Heart right ventricle (tissue), 16 donors: ENCODE measurements at regions of chr5 and their contacts with region 1.

Region 1: DNA sequence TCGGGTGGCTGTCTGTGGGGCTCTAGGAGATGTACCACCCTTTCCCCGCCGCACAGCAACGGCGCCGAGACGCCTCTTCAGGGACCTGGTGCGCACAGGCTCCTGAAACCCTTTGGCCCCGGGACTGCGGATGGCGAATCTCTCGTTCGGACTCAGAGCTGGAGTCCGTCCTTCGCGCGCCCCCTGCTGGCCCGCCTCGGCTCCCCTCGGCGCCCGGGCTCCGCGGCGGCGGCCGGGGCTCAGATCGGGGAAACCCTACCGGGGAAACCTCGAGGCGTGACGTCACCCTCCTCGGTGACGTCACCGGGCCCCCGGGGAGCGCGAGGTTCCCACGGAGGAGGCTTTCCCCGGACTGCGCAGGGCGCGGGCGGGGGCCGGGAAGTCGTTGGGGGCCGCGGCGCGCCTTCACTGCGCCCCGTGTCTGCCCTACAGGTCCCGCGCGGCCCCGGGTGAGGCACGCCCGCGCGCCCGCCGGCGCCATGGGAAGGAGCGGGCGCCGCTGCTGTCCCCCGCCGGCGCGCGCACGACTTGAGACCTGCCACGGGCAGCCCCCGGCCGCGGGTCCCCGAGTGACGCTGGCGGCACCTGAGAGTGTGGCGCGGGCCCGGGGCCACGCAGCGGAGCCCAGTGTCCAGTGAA is 7.9 kb downstream of the PRR7 start:
- DNase-seq: peak; percentile 91 to 93
- ATAC-seq: peak; percentile 63 to 77 (median 74)
- H3K4me3 ChIP-seq: peak overlapping the region; percentile 39 to 84 (median 63)
- H3K27ac ChIP-seq: peak overlapping the region; percentile 1 to 82 (median 74)
- H3K4me1 ChIP-seq: peaks cover 10 to 57% (median 38%) of the 10 kb centered on the region in 9 donors
- H3K27me3 ChIP-seq: peaks cover 0 to 38% (median 2%) of the 10 kb centered on the region in 7 donors
- CTCF ChIP-seq: peak; percentile 88 to 98 (median 93)

Region 2: GRCh38 chr5:177296581-177296980 is 157.9 kb before region 1 on chr5:
- intact Hi-C with region 1: no loop called
- DNase-seq: no peak
- ATAC-seq: peak in 4 of 8 donors; percentile 10 to 47 (median 35)
- H3K4me3 ChIP-seq: no peak overlapping the region
- H3K27ac ChIP-seq: peak overlapping the region in 5 of 10 donors; percentile 7 to 78 (median 58)
- H3K4me1 ChIP-seq: peaks cover 19 to 60% (median 46%) of the 10 kb centered on the region in 9 donors
- H3K27me3 ChIP-seq: no peaks in the 10 kb centered on the region
- CTCF ChIP-seq: no peak

Region 3: GRCh38 chr5:177311723-177312648 is 142.5 kb before region 1 on chr5 and contains the start of gene MXD3:
- intact Hi-C with region 1: loop called in 3 of 10 experiments (anchors 5 to 10 kb)
- DNase-seq: peak; percentile 95 to 97
- ATAC-seq: peak; percentile 85 to 96 (median 92)
- H3K4me3 ChIP-seq: peak within 1 kb of the TSS; percentile 34 to 70 (median 58)
- H3K27ac ChIP-seq: peak within 1 kb of the TSS in 1 of 10 donors; percentile 97
- H3K4me1 ChIP-seq: peaks cover 14 to 63% (median 28%) of the 10 kb centered on the region in 9 donors
- H3K27me3 ChIP-seq: no peaks in the 10 kb centered on the region
- CTCF ChIP-seq: no peak
- total RNA-seq, gene MXD3: 1.2 to 6.4 (median 2.4) TPM

Region 4: DNA sequence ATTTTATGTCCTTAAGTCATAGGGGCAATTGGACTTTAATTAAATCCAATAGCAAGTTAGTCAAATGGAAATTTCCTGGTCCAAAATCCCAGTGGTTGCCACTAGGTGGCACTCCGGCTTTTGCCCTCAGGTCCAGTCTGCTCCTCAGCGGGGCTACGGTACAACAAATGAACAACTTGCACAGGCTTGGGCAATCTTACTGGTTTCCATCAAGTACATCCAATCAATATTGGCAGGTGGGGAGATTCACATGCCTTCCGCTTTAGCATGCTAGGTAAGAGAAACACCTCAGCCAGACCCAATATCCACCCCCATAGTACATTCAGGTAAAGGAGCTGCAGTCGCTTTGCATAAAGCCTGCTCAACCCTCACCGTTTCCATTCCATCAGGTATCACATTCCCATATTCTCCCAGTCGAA is 136.5 kb before region 1 on chr5:
- intact Hi-C with region 1: loop called in 4 of 10 experiments (anchors 2 to 10 kb)
- DNase-seq: peak in 1 of 2 donors; percentile 70
- ATAC-seq: peak in 7 of 8 donors; percentile 45 to 67 (median 57)
- H3K4me3 ChIP-seq: no peak overlapping the region
- H3K27ac ChIP-seq: no peak overlapping the region
- H3K4me1 ChIP-seq: peaks cover 0 to 14% (median under 1%) of the 10 kb centered on the region in 9 donors
- H3K27me3 ChIP-seq: no peaks in the 10 kb centered on the region
- CTCF ChIP-seq: peak; percentile 72 to 91 (median 85)

Region 5: DNA sequence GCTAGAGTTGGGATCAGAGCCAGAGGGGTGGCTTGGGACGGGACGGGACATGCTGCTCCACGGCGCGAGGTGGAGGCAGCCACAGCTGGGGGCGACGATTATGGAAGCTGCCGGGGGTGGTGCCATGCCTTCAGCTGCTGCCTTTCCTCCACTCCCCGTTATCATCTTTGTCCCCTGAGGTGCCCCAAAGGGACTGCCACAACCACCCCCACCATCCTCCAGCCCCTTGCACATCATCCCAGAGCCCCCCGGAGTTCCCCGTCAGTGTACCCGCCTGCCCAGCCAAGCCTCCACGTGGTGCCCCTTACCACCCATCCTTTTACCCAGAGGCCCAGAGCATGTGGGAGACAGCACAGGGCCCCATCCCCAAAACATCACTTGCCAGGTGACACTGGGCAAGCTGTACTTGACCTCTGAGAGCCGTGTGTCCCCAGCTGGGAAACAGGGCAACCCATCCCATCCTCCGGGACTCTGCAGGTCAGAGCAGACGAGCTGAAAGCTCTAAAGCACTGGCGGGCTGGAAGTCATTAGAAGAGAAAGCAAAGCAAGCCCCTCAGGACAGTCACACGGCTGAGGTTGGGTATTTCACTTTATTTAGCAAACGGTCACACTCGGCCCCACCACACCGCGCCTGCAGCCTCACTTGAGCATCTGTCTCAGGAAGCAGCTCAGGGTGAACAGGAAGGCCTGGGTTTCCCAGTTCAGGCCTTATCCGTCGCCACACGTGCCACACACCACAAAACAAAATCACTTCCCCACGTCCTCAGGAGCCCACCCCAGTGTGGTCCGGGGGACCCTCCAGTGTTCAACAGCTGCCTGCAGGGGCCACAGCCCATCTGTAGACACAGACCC is 123.3 kb before region 1 on chr5:
- intact Hi-C with region 1: no loop called
- DNase-seq: no peak
- ATAC-seq: no peak
- H3K4me3 ChIP-seq: no peak overlapping the region
- H3K27ac ChIP-seq: no peak overlapping the region
- H3K4me1 ChIP-seq: peaks cover 5 to 39% (median 20%) of the 10 kb centered on the region in 9 donors
- H3K27me3 ChIP-seq: no peaks in the 10 kb centered on the region
- CTCF ChIP-seq: no peak

Region 6: GRCh38 chr5:177390363-177391300 is 63.9 kb before region 1 on chr5:
- intact Hi-C with region 1: loop called in 9 of 10 experiments (anchors 1 to 5 kb)
- DNase-seq: peak; percentile 69 to 82
- ATAC-seq: peak; percentile 75 to 94 (median 86)
- H3K4me3 ChIP-seq: no peak overlapping the region
- H3K27ac ChIP-seq: peak overlapping the region in 1 of 10 donors; percentile 61
- H3K4me1 ChIP-seq: peaks cover 0 to 30% (median 0%) of the 10 kb centered on the region in 9 donors
- H3K27me3 ChIP-seq: peaks cover 0 to 40% (median 11%) of the 10 kb centered on the region in 7 donors
- CTCF ChIP-seq: peak; percentile 91 to 99 (median 99)

Region 7: GRCh38 chr5:177403792-177404640 is 50.5 kb before region 1 on chr5:
- intact Hi-C with region 1: loop called (anchors 1 to 5 kb)
- DNase-seq: peak; percentile 81 to 86
- ATAC-seq: peak; percentile 94 to 97 (median 96)
- H3K4me3 ChIP-seq: peak overlapping the region; percentile 28 to 64 (median 58)
- H3K27ac ChIP-seq: peak overlapping the region in 1 of 10 donors; percentile 28
- H3K4me1 ChIP-seq: peaks cover 20 to 56% (median 35%) of the 10 kb centered on the region in 9 donors
- H3K27me3 ChIP-seq: peaks cover 35 to 80% (median 59%) of the 10 kb centered on the region in 7 donors
- CTCF ChIP-seq: peak; percentile 64 to 85 (median 76)

Region 8: GRCh38 chr5:177425801-177426565 is 28.5 kb before region 1 on chr5:
- intact Hi-C with region 1: loop called in 1 of 10 experiments (anchors 2 kb)
- DNase-seq: peak; percentile 98 to 100
- ATAC-seq: peak; percentile 96 to 98 (median 97)
- H3K4me3 ChIP-seq: peak overlapping the region; percentile 16 to 94 (median 58)
- H3K27ac ChIP-seq: peak overlapping the region; percentile 85 to 96 (median 92)
- H3K4me1 ChIP-seq: peaks cover 16 to 52% (median 27%) of the 10 kb centered on the region in 9 donors
- H3K27me3 ChIP-seq: no peaks in the 10 kb centered on the region
- CTCF ChIP-seq: no peak

Region 9: DNA sequence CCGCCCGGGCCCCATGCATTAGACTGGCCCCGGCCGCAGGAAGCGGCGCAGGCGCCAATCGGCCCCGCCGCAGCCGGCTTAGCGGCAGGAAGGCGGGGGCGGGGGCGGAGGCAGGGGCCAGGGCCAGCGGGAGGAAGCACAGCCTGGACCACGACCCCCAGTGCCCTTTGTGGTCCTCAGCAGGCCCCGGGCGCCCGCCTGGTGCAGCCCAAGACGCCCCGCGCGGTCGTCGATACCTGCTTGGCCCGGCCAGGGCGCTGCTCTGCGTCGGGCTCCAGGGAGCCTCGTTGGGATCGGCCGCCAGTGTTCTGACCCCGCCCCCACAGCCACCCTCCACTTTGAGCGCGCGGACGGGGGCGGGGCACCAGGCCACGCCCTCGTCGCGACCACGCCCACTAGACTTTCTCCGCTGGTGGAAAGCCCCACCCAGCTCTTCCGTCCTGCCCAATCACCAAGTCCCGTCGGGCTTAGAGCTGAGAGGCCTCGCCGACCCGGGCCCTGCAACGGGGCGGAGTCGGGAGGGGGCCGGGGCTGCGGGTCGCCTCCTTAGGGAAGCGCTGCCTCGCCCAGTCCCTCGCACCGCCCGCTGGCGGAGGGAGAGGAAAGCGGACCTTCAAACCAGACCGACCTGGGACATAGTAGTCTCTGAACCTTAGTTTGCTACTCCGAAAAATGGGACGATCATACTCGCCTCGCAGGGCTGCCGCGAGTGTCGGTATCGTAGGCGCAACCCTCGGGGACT is 42.9 kb after region 1 on chr5 and contains the start of gene PDLIM7:
- intact Hi-C with region 1: loop called in 9 of 10 experiments (anchors 1 to 5 kb)
- DNase-seq: peak; percentile 95 to 96
- ATAC-seq: peak; percentile 81 to 90 (median 88)
- H3K4me3 ChIP-seq: peak within 1 kb of the TSS; percentile 57 to 93 (median 90)
- H3K27ac ChIP-seq: peak within 1 kb of the TSS; percentile 81 to 98 (median 94)
- H3K4me1 ChIP-seq: peaks cover 15 to 76% (median 63%) of the 10 kb centered on the region in 9 donors
- H3K27me3 ChIP-seq: no peaks in the 10 kb centered on the region
- CTCF ChIP-seq: peak in 3 of 9 donors; percentile 9 to 42 (median 36)
- total RNA-seq, gene PDLIM7: 32.5 to 70.6 (median 51.0) TPM